ENCODE measurements at regions of chr22 and their contacts with region 1.

Region 1: DNA sequence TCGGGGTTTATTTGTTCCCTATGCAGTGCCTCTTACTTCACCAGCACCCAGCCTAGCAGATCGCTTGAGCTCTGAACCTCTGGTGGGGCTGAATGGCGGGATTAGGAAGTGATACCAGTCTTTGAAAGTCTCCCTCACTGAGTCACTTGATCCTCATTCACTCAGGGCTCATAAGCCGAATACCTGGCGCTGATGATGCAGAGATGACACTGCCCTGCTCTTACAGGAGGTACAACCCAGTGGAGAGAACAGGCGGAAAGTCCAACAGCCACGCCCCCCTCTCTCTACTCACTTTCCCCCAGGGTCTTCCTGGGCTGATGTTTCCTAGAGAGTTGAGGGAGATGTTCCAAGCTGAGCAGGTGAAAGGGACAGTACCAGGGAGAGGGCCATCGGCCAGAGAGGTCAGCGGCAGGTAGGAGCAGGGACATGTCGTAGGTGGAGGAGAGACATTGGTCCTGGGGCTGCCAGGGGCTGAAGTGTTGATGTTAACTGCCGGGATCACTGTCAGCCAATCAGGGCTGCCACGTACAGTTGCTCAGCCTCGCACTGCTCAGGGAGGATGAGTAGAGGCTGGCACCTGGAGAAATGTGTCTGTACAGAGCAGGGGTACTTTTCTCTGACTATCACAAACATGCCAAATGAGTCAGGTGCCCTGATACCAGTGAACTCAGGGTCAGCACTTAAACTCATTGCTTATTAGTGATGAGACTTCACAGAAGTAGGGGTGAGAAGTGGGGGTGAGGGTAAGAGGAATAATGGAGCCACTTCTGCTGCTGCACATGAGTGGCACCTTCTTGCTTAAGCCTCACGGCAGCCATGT is 9.9 kb upstream of the APOBEC3A start:
- DNase-seq: peak; percentile 11
- H3K4me3 ChIP-seq: no peak overlapping the region
- H3K27ac ChIP-seq: no peak overlapping the region
- H3K4me1 ChIP-seq: peaks cover 5 to 27% (median 12%) of the 10 kb centered on the region in 4 donors
- H3K27me3 ChIP-seq: peaks cover 13% of the 10 kb centered on the region
- CTCF ChIP-seq: no peak
- EP300 ChIP-seq: no peak
- POLR2A ChIP-seq: no peak

Region 2: GRCh38 chr22:38996105-38996504 is 48.6 kb after region 1 on chr22:
- in situ Hi-C with region 1: loop called in 1 of 4 experiments (anchors 5 kb)
- intact Hi-C with region 1: no loop called
- DNase-seq: no peak
- H3K4me3 ChIP-seq: no peak overlapping the region
- H3K27ac ChIP-seq: no peak overlapping the region
- H3K4me1 ChIP-seq: no peaks in the 10 kb centered on the region
- H3K27me3 ChIP-seq: peaks cover 5% of the 10 kb centered on the region
- CTCF ChIP-seq: no peak
- EP300 ChIP-seq: no peak
- POLR2A ChIP-seq: no peak

Measured in transverse colon (tissue), 4 donors.